ENCODE measurements at regions of chr6 and their contacts with region 1.

Region 1: GRCh38 chr6:31580807-31581433 is 1.3 kb downstream of the LTB start:
- DNase-seq: peak; percentile 66 to 77
- ATAC-seq: peak; percentile 92 to 95
- H3K4me3 ChIP-seq: peak overlapping the region; percentile 67 to 96 (median 90)
- H3K27ac ChIP-seq: peak overlapping the region; percentile 74 to 84 (median 77)
- H3K4me1 ChIP-seq: peaks cover 0 to 5% of the 10 kb centered on the region in 2 donors
- H3K27me3 ChIP-seq: no peaks in the 10 kb centered on the region
- CTCF ChIP-seq: peak; percentile 94 to 98 (median 96)
- POLR2A ChIP-seq: peak in 1 of 2 donors; percentile 22

Region 2: DNA sequence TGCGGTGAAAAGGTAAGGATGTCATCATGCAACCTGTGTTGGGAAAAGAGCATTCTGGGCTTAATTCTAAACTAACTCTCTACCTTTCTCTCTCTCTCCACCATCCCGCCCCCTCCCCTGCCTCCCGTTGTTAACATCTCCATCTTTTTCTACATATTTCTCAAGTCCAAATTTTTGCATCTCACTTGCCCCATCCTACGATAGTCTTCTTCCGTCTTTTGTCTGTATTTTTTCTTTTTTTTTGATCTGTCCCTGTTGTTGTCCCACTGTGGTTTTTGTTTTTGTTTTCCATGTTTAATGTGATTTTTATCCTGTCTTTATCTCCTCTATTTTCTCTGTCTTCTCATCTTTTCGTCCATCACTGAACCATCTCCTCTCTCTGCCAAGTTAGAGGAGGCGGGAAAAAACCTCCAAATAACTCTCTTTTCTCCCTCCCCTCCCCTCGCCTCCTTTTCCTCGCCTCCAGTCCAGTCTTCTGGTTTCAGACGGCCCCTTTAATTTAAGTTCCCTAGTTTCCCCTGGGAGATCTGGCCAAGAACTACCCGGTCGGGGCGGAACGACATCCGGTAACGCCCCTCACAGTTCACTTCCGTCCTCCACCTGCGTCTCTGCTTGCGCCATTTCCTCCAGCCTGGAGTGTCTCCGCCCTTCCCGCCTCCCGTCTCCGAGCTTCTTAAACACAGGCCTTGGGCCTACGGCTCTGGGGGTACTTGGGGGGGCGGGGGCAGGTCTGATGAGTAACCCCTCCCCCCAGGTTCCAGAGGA is 33.8 kb before region 1 on chr6 and contains the start of gene NFKBIL1:
- in situ Hi-C with region 1: no loop called
- intact Hi-C with region 1: loop called (anchors 1 kb)
- DNase-seq: peak; percentile 96
- ATAC-seq: peak; percentile 97 to 98
- H3K4me3 ChIP-seq: peak within 1 kb of the TSS; percentile 48 to 72 (median 63)
- H3K27ac ChIP-seq: peak within 1 kb of the TSS; percentile 86 to 97 (median 90)
- H3K4me1 ChIP-seq: peaks cover 20 to 22% of the 10 kb centered on the region in 2 donors
- H3K27me3 ChIP-seq: no peaks in the 10 kb centered on the region
- CTCF ChIP-seq: peak in 1 of 5 experiments; percentile 13
- POLR2A ChIP-seq: peak; percentile 64 to 68
- total RNA-seq, gene NFKBIL1: 17.6 to 21.7 (median 20.3) TPM

Measured in gastrocnemius medialis (tissue), 4 donors.